HCT116 (cell line): ENCODE measurements at regions of chr18 and their contacts with region 1.

Region 1: DNA sequence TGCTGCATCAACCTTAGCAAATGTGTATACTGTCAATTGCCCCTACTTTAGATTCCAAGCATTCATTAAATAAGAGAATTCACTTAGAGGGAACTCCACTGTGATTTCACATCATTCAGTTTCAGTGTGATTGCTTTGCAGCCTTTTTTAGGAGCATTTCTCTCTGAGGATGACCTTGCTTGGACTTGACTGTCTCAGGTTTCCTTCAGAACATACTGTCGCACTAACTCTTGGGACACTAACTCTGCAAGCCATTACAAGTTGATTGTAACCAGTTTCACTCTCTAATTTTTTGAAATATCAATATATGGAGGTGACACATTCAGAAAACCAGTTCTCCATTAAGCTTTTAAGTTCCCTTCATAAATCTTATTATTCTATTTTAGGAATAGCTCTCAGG is 6.6 kb upstream of the ZCCHC2 start:
- DNase-seq: no peak
- ATAC-seq: no peak
- H3K4me3 ChIP-seq: no peak overlapping the region
- H3K27ac ChIP-seq: no peak overlapping the region
- H3K4me1 ChIP-seq: peaks cover under 1 to 3% of the 10 kb centered on the region in 2 experiments; a peak in 3 of 4 replicates
- H3K27me3 ChIP-seq: no peaks in the 10 kb centered on the region
- CTCF ChIP-seq: no peak
- POLR2A ChIP-seq: no peak
- RAD21 ChIP-seq: no peak

Region 2: DNA sequence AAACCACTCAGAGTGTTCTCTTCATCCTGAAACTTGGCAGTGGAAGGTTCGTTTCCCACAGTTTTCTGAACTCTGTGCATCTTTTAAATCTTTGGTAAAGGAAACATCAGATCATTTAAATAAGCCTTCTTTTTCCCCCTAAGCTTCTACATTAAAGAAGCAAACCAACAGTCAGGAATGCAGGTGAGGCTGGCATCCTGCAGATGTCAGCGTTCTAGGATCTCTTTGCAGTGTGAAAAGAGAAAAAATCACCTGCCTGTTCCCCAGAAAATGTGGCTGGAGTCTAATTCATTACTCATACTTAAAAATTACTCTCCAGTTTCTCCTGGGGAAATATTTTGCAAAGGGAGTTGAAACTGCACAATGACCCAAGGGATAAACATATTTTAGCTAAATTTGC is 57.9 kb before region 1 on chr18:
- CTCF ChIA-PET with region 1: no interaction called
- POLR2A ChIA-PET with region 1: no interaction called
- RAD21 ChIA-PET with region 1: no interaction called
- intact Hi-C with region 1: loop called (anchors 2 kb)
- DNase-seq: no peak
- ATAC-seq: peak; percentile 69
- H3K4me3 ChIP-seq: no peak overlapping the region
- H3K27ac ChIP-seq: no peak overlapping the region
- H3K4me1 ChIP-seq: peaks cover 8 to 22% of the 10 kb centered on the region in 2 experiments
- H3K27me3 ChIP-seq: no peaks in the 10 kb centered on the region
- CTCF ChIP-seq: peak in 2 of 3 experiments; percentile 8 to 31; a peak in 2 of 6 replicates
- POLR2A ChIP-seq: no peak
- RAD21 ChIP-seq: peak; percentile 40